ENCODE measurements at regions of chr4 and their contacts with region 1.

Region 1: DNA sequence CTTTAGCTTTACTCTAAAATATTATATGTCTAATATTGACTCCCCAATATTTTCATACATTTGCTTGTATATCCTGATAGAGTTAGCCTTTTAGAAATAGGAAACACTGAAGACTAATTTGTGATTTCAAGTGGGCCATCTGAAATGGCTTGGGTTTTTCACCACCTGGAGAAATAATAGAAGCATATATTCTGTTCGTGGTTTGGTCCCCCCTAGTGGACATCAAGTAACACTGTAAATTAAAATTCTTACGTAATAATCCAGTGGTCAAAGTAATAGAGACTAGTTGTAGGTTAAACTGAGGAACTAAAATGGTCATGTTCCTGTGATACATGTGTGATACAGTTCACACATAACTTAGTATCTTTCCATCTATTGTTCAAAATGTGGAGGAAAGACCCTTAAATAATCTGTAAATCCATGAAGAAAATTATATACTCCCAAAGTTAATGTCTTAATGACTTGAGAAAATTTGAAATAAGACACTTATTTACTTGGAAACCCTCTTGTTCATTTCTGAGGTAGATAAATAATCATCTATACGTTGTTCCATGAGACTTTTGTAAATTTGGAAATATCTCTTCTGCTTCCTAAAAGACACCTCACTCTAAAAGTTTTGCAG is 79.8 kb upstream of the SMARCAD1 start:
- DNase-seq: no peak
- H3K4me3 ChIP-seq: no peak overlapping the region
- H3K27me3 ChIP-seq: no peaks in the 10 kb centered on the region
- CTCF ChIP-seq: peak; percentile 63

Region 2: GRCh38 chr4:94139931-94140612 is 12.3 kb after region 1 on chr4:
- CTCF ChIA-PET with region 1: interaction called, 14 read pairs
- POLR2A ChIA-PET with region 1: no interaction called
- DNase-seq: no peak
- H3K4me3 ChIP-seq: no peak overlapping the region
- H3K27me3 ChIP-seq: no peaks in the 10 kb centered on the region
- CTCF ChIP-seq: no peak